Motor neuron (in vitro differentiated cells): ENCODE measurements at regions of chr11 and their contacts with region 1.

Region 1: DNA sequence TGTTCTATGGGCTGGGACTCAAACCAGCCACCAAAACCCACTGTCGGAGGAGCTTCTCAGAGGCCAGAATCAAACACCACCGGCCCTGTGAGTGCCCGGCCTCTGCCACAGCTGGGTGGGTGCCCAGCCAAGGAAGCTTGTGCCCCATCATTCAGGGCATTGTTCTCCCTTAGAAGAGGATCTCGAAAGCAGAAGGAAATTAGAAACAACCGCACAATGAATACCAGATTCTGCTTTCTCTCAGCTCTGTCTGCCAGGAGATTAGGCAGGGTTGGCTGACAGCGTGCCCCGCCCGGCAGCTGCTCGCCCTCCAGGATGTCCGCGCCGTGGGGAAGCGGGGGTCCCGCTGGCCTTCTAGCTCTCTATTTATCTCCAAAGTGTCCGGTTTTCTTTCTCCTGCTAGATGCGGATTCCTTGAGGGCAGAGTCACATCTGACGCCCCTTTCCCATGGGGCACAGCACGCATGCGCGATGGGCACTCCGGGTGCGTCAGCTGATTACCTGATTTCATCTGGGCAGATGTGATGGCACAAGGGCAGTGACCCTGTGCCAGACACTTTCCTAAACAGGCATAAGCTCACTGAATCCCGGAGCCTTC is 25.5 kb downstream of the SCGB1A1 start:
- ATAC-seq: peak in 4 of 8 experiments; percentile 32 to 74 (median 60)
- H3K4me3 ChIP-seq: no peak overlapping the region
- H3K27ac ChIP-seq: no peak overlapping the region
- H3K4me1 ChIP-seq: peaks cover 4 to 6% of the 10 kb centered on the region in 2 donors

Region 2: DNA sequence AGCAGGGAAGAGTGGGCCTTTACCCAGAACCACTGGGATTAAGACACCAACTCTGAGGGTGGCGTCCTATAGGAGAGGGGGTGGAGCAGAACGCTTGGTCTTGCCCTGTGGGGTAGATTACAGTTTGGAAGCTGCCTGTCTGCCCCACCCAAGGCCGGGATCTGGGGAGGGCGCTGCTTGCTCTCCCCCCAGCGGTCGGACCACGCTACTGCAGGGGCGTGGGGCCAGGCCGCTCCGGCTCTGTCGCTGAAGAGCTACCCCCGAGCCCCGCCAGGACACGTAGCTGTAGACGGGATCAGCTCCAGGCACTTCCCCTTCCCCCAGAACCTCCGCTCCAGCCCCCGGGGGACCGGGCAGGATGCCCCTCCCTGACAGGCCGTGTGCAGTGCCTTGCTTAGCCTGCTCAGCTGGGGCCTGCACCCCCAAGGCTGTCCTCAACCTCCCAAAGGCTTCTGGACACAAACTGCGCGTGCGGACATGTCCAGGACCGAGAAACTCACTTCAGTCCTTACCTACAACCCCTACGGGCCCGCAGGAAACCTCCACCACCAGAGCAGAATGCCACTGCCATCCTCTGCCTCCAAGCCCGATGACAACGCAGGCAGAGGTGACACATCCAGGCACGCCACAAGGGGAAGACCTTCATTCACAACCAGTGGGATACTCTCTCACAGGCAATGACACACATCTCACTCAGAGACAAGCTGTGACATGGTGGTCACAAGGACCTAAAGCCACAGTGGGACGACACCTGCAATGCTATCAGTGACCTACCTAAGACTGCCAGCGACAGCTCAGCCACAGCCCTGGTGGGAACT is 98.6 kb after region 1 on chr11:
- in situ Hi-C with region 1: loop called in 1 of 9 experiments (anchors 25 kb)
- ATAC-seq: peak; percentile 13 to 57 (median 42)
- H3K4me3 ChIP-seq: no peak overlapping the region
- H3K27ac ChIP-seq: no peak overlapping the region
- H3K4me1 ChIP-seq: peaks cover 31 to 51% of the 10 kb centered on the region in 2 donors